ENCODE measurements at regions of chr7 and their contacts with region 1.

Region 1: GRCh38 chr7:151172273-151173141 is 5.0 kb upstream of the GBX1 start:
- DNase-seq: peak; percentile 13
- H3K4me3 ChIP-seq: no peak overlapping the region
- H3K27ac ChIP-seq: no peak overlapping the region
- H3K27me3 ChIP-seq: peaks cover 54% of the 10 kb centered on the region
- CTCF ChIP-seq: peak; percentile 100

Region 2: GRCh38 chr7:151161757-151162156 is 10.8 kb before region 1 on chr7:
- CTCF ChIA-PET with region 1: interaction called, 21 read pairs
- POLR2A ChIA-PET with region 1: no interaction called
- DNase-seq: no peak
- H3K4me3 ChIP-seq: no peak overlapping the region
- H3K27ac ChIP-seq: no peak overlapping the region
- H3K27me3 ChIP-seq: peaks cover 70% of the 10 kb centered on the region
- CTCF ChIP-seq: no peak

Region 3: DNA sequence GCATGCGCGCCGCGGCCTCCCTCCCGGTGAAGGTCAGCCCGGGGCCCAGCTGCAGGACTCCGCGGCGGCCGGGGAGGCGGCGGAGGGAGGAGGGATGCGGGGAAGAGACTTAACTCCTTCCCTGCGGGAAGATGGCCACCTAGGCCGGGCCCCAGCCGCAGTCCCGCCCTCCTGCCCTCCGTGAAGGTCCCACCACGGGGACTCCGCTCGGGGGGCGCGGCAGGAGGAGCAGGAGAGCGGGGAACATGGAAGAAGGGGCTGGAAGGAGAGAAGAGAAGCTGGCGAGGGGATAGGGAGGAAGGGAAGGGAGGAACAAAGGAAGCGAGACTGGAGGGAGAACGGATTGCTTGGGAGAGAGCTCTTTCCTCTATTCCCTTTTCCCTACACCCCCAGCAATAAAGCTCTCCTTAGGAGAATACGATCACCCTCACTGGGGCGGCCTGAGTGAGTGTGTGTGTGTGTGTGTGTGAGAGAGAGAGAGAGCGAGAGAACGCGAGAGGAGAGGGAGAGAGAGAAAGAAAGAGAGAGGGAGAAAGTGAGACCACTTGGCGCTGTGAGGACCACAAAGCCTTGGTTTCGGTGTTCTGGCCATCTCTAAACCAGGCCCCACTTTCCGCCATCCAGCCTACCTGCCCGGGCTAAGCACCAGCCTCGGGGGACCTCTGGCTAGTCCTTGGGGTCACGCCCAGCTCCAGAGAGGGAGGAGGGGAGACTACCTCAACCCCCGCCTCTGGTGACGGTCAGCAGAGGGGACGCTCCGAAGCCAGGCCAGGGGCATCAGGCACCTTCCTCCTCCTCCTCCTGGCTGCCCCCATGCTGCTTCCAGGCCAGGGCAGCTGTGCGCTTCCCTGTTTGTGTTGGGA is 79.7 kb after region 1 on chr7:
- CTCF ChIA-PET with region 1: no interaction called
- POLR2A ChIA-PET with region 1: no interaction called
- DNase-seq: peak; percentile 33
- H3K4me3 ChIP-seq: peak overlapping the region; percentile 61
- H3K27ac ChIP-seq: peak overlapping the region; percentile 85
- H3K27me3 ChIP-seq: peaks cover 7% of the 10 kb centered on the region
- CTCF ChIP-seq: no peak